SK-N-SH (cell line): ENCODE measurements at regions of chr14 and their contacts with region 1.

Region 1: GRCh38 chr14:30982533-30982932 is 42.9 kb upstream of the AP4S1 start:
- DNase-seq: no peak
- H3K4me3 ChIP-seq: no peak overlapping the region
- H3K27ac ChIP-seq: no peak overlapping the region
- H3K4me1 ChIP-seq: no peaks in the 10 kb centered on the region
- H3K27me3 ChIP-seq: no peaks in the 10 kb centered on the region
- CTCF ChIP-seq: no peak
- EP300 ChIP-seq: no peak
- RAD21 ChIP-seq: no peak

Region 2: DNA sequence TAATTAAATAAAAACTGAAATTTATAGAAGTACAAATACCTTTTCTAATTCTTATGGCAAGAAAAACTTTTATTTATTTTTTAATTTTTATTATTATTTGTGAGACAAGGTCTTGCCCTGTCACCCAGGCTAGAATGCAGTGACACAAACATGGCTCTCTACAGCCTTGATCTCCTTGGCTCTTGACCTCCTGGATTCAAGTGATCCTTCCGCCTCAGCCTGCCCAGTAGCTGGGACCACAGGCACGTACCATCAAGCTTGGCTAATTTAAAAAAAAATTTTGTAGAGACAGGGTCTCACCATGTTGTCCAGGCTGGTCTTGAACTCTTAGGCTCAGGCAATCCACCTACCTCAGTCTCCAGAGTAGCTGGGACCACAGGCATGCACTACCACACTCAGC is 60.7 kb before region 1 on chr14:
- CTCF ChIA-PET with region 1: no interaction called
- POLR2A ChIA-PET with region 1: no interaction called
- DNase-seq: no peak
- H3K4me3 ChIP-seq: no peak overlapping the region
- H3K27ac ChIP-seq: no peak overlapping the region
- H3K4me1 ChIP-seq: peaks cover 4 to 13% of the 10 kb centered on the region in 2 experiments; a peak in 2 of 4 replicates
- H3K27me3 ChIP-seq: no peaks in the 10 kb centered on the region
- CTCF ChIP-seq: no peak
- EP300 ChIP-seq: no peak
- RAD21 ChIP-seq: no peak

Region 3: GRCh38 chr14:30971586-30971985 is 10.9 kb before region 1 on chr14:
- CTCF ChIA-PET with region 1: interaction called, 14 read pairs
- POLR2A ChIA-PET with region 1: no interaction called
- DNase-seq: no peak
- H3K4me3 ChIP-seq: no peak overlapping the region
- H3K27ac ChIP-seq: no peak overlapping the region
- H3K4me1 ChIP-seq: no peaks in the 10 kb centered on the region; a peak in 1 of 4 replicates
- H3K27me3 ChIP-seq: no peaks in the 10 kb centered on the region
- CTCF ChIP-seq: no peak
- EP300 ChIP-seq: no peak
- RAD21 ChIP-seq: no peak

Region 4: DNA sequence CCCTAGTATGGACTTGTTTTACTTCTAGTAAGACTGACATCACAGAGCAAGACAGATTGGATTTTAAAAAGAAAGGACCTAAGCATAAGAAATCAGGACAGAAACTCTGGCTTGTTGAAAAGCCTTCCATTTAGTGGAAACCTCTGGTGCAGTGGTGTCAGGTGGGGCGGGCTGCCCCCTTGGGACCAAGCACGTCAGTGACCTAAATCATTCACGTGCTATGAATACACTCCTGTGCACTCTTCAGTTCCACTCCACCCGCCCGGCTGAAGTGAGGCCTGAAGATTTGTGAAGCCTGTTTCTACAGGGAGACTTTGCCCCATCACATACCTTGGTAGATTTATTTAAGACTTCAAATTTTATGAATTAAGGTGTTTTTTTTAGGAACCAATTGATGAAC is 101.9 kb after region 1 on chr14:
- CTCF ChIA-PET with region 1: interaction called, 24 read pairs
- POLR2A ChIA-PET with region 1: no interaction called
- DNase-seq: no peak
- H3K4me3 ChIP-seq: no peak overlapping the region
- H3K27ac ChIP-seq: no peak overlapping the region
- H3K4me1 ChIP-seq: no peaks in the 10 kb centered on the region
- H3K27me3 ChIP-seq: no peaks in the 10 kb centered on the region
- CTCF ChIP-seq: no peak
- EP300 ChIP-seq: no peak
- RAD21 ChIP-seq: no peak